ENCODE measurements at regions of chr9 and their contacts with region 1.

Region 1: DNA sequence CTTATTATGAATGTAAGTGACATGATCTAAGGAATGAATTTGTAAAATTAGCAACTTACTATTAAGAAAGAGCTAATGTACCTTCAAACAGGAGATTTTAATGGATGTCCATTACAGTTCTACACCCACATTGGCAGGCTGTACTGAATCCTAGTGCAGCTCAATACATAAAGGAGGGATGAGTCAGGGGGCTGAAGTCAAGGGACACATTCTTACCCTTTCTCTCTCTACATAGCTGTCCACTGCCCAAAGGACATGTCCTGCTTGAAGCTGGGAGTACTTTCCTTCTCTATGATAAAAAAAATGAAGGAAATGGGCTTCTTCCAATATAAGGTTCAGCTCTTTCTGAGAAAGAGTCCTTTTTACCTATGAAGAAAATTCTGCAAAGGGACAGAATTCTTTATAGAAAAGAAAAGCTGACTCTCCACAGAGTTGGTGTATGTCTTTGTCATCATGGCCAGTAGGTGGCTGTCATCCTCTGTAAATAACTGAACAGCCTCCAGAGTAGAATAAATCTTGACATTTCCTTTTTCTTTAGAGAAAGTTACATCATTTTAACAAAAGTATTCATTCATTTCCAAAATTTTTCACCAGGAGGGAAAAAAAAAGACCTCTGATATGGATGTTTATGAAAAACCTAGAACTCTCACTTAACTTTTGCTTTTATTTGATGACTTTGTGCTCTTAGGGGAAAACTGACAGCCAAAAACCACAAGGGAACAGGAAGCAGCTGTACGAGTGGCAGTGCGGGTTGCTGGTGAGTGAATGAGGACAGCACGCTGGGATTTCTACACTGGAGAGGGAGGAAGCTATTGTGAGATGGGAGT is 13.1 kb upstream of the IFNA14 start:
- DNase-seq: peak; percentile 23
- H3K4me3 Mint-ChIP-seq: no peak overlapping the region
- H3K27ac Mint-ChIP-seq: no peak overlapping the region
- H3K4me1 Mint-ChIP-seq: peaks cover 6% of the 10 kb centered on the region
- H3K27me3 Mint-ChIP-seq: peaks cover 87% of the 10 kb centered on the region
- CTCF ChIP-seq: peak; percentile 25

Region 2: DNA sequence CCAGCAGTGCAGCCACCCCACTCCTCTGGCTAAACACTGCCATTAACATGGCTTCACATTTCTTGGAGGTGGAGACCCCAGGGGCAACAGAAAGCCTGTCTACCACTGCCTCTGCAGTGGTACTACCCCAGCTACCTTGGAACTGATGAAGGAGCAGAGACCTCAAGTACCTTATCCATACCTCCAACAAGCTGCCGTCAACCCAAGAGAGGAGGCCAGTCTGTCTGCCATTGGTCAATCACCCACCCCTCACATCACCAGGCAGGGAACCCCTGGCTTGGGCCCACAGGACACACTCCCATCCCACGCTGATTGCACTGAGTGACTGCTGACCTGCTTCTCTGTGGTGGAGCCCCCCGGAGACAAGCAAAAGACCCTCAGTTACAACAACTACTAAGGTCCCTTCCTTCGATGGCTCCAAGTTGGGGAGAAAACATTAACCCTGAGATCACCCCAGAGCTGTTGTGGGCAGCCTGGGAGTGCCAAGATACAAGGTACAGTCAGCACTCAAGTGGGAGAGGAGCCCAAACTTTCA is 18.7 kb before region 1 on chr9:
- CTCF ChIA-PET with region 1: interaction called, 17 read pairs
- POLR2A ChIA-PET with region 1: no interaction called
- intact Hi-C with region 1: no loop called
- DNase-seq: no peak
- H3K4me3 Mint-ChIP-seq: no peak overlapping the region
- H3K27ac Mint-ChIP-seq: no peak overlapping the region
- H3K4me1 Mint-ChIP-seq: peaks cover 5% of the 10 kb centered on the region
- H3K27me3 Mint-ChIP-seq: peaks cover 32% of the 10 kb centered on the region
- CTCF ChIP-seq: no peak

Region 3: GRCh38 chr9:21265421-21266189 is 12.7 kb after region 1 on chr9:
- CTCF ChIA-PET with region 1: interaction called, 10 read pairs
- POLR2A ChIA-PET with region 1: no interaction called
- intact Hi-C with region 1: no loop called
- DNase-seq: no peak
- H3K4me3 Mint-ChIP-seq: no peak overlapping the region
- H3K27ac Mint-ChIP-seq: no peak overlapping the region
- H3K4me1 Mint-ChIP-seq: no peaks in the 10 kb centered on the region
- H3K27me3 Mint-ChIP-seq: peaks cover 63% of the 10 kb centered on the region
- CTCF ChIP-seq: no peak

Region 4: GRCh38 chr9:21317956-21318923 is 65.3 kb after region 1 on chr9:
- CTCF ChIA-PET with region 1: interaction called, 25 read pairs
- POLR2A ChIA-PET with region 1: interaction called, 3 read pairs
- intact Hi-C with region 1: no loop called
- DNase-seq: peak; percentile 27
- H3K4me3 Mint-ChIP-seq: no peak overlapping the region
- H3K27ac Mint-ChIP-seq: no peak overlapping the region
- H3K4me1 Mint-ChIP-seq: no peaks in the 10 kb centered on the region
- H3K27me3 Mint-ChIP-seq: peaks cover 31% of the 10 kb centered on the region
- CTCF ChIP-seq: peak; percentile 35

Region 5: DNA sequence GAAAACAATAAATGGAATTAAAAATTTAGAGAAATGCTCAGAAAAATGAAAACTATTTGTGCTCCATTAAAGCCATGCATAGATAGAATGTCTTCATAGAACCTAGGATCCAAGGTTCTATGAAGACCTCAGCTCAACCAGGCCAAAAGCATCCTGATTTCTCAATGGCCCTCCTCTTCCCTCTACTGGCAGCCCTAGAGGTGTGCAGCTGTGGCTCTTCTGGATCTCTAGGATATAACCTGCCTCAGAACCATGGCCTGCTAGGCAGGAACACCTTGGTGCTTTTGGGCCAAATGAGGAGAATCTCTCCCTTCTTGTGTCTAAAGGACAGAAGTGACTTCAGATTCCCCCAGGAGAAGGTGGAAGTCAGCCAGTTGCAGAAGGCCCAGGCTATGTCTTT is 202.4 kb after region 1 on chr9:
- CTCF ChIA-PET with region 1: interaction called, 5 read pairs
- POLR2A ChIA-PET with region 1: interaction called, 3 read pairs
- intact Hi-C with region 1: loop called (anchors 10 kb)
- DNase-seq: peak; percentile 28
- H3K4me3 Mint-ChIP-seq: no peak overlapping the region
- H3K27ac Mint-ChIP-seq: no peak overlapping the region
- H3K4me1 Mint-ChIP-seq: no peaks in the 10 kb centered on the region
- H3K27me3 Mint-ChIP-seq: no peaks in the 10 kb centered on the region
- CTCF ChIP-seq: peak; percentile 33

Region 6: DNA sequence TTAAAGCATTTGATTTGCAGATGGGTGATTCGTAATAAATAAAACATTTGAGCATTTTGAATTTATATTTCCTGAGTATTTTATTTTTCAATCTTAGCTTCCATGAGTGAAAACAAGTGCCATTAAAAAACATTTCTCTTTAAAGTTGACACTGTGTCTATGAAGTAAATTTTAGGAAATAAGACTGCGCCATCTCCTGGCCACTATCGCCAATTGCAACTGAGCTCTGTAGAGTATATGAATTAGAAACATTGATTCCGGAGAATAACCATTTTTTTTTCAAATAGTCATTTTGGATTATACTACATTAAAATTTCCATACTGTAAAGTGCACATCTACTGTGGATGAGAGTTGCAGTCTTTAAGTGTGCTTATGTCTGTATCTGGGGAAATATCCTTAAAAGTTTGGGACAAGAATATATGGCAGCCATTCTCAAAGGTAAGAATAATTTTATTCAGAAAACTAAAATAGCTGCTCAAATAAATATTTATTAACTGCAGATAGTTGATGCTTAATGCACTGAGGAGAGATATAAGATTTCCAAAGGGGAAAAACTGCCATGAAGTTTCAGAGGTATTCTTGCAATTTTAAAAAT is 1199.6 kb after region 1 on chr9:
- CTCF ChIA-PET with region 1: no interaction called
- POLR2A ChIA-PET with region 1: no interaction called
- intact Hi-C with region 1: loop called (anchors 5 kb)
- DNase-seq: peak; percentile 33
- H3K4me3 Mint-ChIP-seq: no peak overlapping the region
- H3K27ac Mint-ChIP-seq: no peak overlapping the region
- H3K4me1 Mint-ChIP-seq: no peaks in the 10 kb centered on the region
- H3K27me3 Mint-ChIP-seq: no peaks in the 10 kb centered on the region
- CTCF ChIP-seq: peak; percentile 39

Measured in MCF 10A (cell line).